Calu3 (cell line): ENCODE measurements at regions of chr2 and their contacts with region 1.

Region 1: GRCh38 chr2:24827321-24828237 is 34.4 kb downstream of the CENPO start:
- DNase-seq: peak; percentile 74
- H3K4me3 Mint-ChIP-seq: no peak overlapping the region
- H3K27ac Mint-ChIP-seq: no peak overlapping the region
- H3K4me1 Mint-ChIP-seq: no peaks in the 10 kb centered on the region
- H3K27me3 Mint-ChIP-seq: no peaks in the 10 kb centered on the region
- CTCF ChIP-seq: peak; percentile 64

Region 2: GRCh38 chr2:24613154-24613814 is 214.3 kb before region 1 on chr2:
- CTCF ChIA-PET with region 1: no interaction called
- intact Hi-C with region 1: loop called (anchors 1 kb)
- DNase-seq: peak; percentile 30
- H3K4me3 Mint-ChIP-seq: no peak overlapping the region
- H3K27ac Mint-ChIP-seq: no peak overlapping the region
- H3K4me1 Mint-ChIP-seq: no peaks in the 10 kb centered on the region
- H3K27me3 Mint-ChIP-seq: no peaks in the 10 kb centered on the region
- CTCF ChIP-seq: peak; percentile 43

Region 3: DNA sequence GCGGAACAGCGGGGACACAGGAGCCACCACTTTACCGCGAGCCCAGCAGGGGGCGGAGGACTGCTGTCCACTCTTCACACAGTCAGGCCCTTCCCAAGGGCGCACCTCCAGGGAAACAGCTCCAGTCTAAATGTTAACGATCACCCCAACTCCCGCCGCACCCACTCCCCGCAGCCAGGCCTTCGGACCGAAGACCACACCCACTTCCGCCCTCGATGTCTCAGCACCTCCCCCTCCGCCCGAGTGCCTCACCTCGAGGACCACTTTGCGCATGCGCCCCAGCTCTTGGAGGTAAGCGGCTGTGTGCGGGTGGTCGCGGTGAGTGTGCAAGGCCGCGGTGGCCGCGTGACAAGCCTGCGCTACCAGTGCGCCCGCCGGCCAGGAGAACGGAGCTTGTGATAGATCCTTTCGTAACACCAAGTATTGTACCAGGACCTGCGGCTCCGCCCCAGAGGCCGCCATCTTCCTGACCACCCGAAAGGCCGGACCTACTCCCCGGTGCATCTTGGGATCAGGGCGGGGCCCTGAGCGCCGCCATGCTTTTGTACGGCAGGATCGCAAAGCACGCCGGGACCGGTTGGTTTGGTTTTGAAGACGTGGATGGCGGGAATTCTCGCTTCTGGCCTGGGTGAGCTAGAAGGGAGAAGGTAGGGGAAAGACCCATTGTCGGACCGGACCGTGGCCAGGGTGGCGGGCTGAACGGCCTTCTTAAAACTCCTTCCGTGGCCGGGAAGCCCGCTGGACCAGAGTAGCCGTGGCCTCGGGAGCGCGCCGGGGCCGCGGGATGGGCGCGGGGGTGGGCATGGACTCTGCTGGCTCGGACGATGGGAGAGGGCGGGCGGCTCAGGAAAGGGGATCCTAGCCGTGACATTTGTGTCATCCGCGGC is 34.5 kb before region 1 on chr2 and contains the starts of genes CENPO and PTRHD1:
- CTCF ChIA-PET with region 1: interaction called, 14 read pairs
- intact Hi-C with region 1: no loop called
- DNase-seq: peak; percentile 96
- H3K4me3 Mint-ChIP-seq: peak within 1 kb of the TSS; percentile 83
- H3K27ac Mint-ChIP-seq: peak within 1 kb of the TSS; percentile 93
- H3K4me1 Mint-ChIP-seq: peaks cover 35% of the 10 kb centered on the region
- H3K27me3 Mint-ChIP-seq: no peaks in the 10 kb centered on the region
- CTCF ChIP-seq: peak; percentile 77
- total RNA-seq, gene CENPO: 38.9 and 43.1 TPM in 2 replicates
- total RNA-seq, gene PTRHD1: 22.3 and 23.8 TPM in 2 replicates